AG04449 (cell line): ENCODE measurements at regions of chr11 and their contacts with region 1.

Region 1: DNA sequence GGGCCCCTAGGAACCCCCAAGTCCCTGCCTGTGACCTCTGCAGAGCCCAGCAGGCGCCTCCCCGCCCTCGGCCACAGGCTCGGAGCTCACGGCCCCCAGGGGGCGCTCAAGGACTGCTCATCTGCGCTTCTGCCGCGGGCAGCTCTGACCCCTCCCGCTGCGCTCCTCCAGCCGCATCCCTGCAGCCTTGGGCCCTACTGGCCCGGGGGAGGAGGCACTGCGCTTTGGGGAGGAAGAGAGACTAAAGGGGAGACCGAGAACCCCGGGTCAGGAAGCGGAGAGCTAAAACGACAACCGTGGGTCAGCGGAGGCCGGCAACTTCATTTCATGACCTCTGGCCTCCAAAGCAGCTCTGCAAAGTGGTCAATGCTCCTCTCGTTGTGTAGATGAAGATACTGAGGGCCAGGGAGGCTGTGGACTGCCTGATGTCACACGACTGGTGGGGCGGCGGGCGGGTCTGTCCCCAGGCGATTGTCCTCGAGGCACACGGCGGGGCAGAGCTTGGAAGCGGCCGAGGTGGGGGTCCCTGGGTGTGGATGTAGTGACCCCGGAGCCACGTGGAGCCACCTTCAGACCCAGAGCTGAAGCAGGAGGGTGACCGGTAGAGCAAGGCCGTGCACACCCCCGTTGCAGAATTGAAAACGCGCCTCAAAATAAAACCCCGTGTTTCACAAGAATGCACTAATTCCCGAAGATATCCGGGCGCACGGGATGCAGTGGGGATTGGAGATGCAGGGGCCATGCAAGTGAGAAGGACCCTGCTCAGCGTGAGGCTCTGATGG is 2.7 kb upstream of the KRTAP5-6 start:
- DNase-seq: peak; percentile 3
- H3K4me3 ChIP-seq: no peak overlapping the region
- CTCF ChIP-seq: peak; percentile 97

Region 2: GRCh38 chr11:1717745-1718144 is 23.5 kb after region 1 on chr11:
- CTCF ChIA-PET with region 1: interaction called, 24 read pairs
- POLR2A ChIA-PET with region 1: no interaction called
- DNase-seq: no peak
- H3K4me3 ChIP-seq: no peak overlapping the region
- CTCF ChIP-seq: no peak

Region 3: GRCh38 chr11:1807264-1807995 is 113.2 kb after region 1 on chr11:
- CTCF ChIA-PET with region 1: interaction called, 37 read pairs
- POLR2A ChIA-PET with region 1: no interaction called
- DNase-seq: no peak
- H3K4me3 ChIP-seq: no peak overlapping the region
- CTCF ChIP-seq: no peak

Region 4: DNA sequence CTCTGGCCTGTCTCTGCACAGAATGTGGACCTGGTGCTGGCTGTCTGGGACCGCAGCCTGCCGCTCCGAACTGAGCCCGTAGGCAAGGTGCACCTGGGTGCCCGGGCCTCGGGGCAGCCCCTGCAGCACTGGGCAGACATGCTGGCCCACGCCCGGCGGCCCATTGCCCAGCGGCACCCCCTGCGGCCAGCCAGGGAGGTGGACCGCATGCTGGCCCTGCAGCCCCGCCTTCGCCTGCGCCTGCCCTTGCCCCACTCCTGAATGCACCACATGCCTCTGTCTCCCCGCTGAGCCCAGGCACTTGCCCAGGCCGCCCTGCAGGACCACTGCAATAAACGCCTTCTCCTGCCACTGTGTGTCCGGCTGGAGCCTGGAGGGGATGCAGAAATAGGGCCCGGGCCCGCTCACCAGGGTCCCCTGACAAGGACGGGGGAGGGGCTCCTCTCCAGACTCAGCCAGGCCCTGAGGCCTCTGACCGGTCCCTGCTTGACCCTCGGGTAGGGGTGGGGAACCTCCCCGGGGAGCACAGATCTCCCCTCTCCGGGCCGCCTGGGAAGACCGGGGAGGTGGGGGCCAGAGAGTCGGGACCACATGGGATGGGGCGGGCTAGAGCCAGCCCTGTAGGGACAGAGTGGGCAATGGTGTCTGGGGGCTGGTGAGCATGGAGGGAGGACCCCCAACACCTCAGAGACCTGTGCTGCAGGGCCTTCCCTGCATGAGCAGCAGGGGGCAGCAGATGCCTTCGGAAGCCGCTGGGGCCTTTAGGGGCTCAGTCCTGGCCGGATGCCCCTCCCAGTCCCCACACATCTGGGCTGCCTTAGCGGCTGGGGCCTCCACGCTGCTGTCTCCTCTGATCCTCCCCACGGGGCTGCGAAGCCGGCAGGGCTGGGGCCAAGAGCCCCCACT is 143.2 kb after region 1 on chr11:
- CTCF ChIA-PET with region 1: interaction called, 671 read pairs
- POLR2A ChIA-PET with region 1: interaction called, 7 read pairs
- DNase-seq: no peak
- H3K4me3 ChIP-seq: no peak overlapping the region
- CTCF ChIP-seq: peak; percentile 97

Region 5: DNA sequence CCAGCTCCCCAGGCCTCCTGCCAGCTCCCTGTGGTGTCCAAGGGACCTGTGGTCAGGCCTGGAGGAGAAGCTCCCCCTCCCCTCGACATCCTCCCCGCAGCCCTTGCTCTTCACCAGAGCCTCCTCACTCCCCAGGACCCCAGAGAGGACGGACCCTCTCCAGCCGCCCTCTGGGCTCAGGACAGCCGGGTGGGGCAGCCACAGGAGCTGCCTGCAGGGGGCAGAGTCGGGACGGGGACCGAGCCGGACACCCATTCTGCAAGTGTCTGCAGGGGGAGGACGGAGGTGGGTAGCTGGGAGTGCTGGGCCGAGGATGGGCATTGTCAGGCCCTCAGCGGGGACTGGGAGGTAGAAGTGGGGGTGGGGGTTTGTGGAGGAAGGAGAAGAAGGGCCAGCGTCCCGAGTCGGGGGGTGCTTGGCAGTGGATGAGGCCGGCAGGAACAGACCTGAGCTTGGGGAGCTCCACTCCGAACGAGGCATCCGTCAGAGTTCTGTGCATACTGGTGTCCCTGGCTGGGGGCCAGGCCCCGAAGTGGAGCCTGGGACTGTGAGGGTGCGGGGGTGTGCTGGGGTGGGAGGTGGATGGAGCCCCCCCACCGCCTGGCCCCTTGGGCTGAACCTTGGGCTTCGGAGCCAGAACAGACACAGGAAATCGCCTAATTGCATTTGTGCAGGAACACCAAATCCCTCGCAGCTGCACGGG is 182.3 kb after region 1 on chr11:
- CTCF ChIA-PET with region 1: interaction called, 36 read pairs
- POLR2A ChIA-PET with region 1: no interaction called
- DNase-seq: no peak
- H3K4me3 ChIP-seq: no peak overlapping the region
- CTCF ChIP-seq: peak; percentile 65

Region 6: DNA sequence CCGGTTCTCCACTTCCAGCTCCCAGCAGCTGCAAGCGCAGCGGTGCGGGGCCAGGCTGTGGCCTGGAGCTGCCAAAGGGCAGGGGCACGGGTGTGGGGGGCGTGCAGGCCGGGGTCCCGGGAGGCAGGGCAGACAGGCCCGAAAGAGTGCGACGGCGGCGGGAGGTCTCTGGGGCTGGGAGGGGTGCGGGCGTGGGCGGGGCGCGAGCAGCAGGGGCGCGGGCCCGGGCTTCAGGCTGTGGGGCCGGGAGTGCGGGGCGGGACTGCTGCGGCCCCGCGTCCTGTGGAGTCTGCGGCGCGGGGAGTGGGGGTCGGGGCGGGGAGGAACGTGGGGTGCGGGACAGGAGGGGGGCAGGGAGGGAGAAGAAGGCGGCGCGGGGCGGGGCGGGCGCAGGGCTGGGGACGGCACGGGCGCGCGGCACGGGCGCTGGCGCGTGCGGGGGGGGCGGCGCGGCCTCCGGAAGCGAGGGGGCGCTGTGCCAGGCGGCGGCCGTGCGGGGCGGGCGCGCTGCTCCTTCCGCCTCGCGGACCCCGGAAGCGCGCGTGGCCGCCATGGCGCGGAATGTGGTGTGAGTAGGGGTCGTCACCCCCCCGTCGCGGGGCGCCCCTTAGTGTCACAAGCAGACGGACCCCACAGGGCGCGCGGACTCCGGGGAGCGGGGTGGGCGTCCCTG is 252.7 kb after region 1 on chr11 and contains the start of gene MRPL23:
- CTCF ChIA-PET with region 1: interaction called, 21 read pairs
- POLR2A ChIA-PET with region 1: no interaction called
- DNase-seq: no peak
- H3K4me3 ChIP-seq: no peak within 1 kb of the TSS
- CTCF ChIP-seq: no peak